H1 (cell line): ENCODE measurements at regions of chr19 and their contacts with region 1.

Region 1: GRCh38 chr19:13774217-13775191 is at the start of gene C19orf53:
- DNase-seq: peak in 1 of 2 experiments; percentile 85
- H3K4me3 ChIP-seq: peak within 1 kb of the TSS; percentile 81 to 99 (median 92)
- H3K27ac ChIP-seq: peak within 1 kb of the TSS; percentile 92
- H3K4me1 ChIP-seq: peaks cover 0 to 4% (median 1%) of the 10 kb centered on the region in 4 experiments; a peak in 1 of 7 replicates
- H3K27me3 ChIP-seq: no peaks in the 10 kb centered on the region
- CTCF ChIP-seq: no peak
- EP300 ChIP-seq: peak in 1 of 2 experiments; percentile 28; a peak in 1 of 3 replicates
- POLR2A ChIP-seq: peak; percentile 88 to 95
- RAD21 ChIP-seq: no peak
- total RNA-seq, gene C19orf53: 104 and 116 TPM in 2 replicates

Region 2: GRCh38 chr19:13742756-13743155 is 31.7 kb before region 1 on chr19:
- CTCF ChIA-PET with region 1: no interaction called
- POLR2A ChIA-PET with region 1: interaction called, 11 read pairs
- DNase-seq: no peak
- H3K4me3 ChIP-seq: no peak overlapping the region
- H3K27ac ChIP-seq: no peak overlapping the region
- H3K4me1 ChIP-seq: peaks cover 0 to 5% (median 3%) of the 10 kb centered on the region in 4 experiments; a peak in 2 of 7 replicates
- H3K27me3 ChIP-seq: no peaks in the 10 kb centered on the region
- CTCF ChIP-seq: no peak
- EP300 ChIP-seq: no peak
- POLR2A ChIP-seq: no peak
- RAD21 ChIP-seq: no peak

Region 3: DNA sequence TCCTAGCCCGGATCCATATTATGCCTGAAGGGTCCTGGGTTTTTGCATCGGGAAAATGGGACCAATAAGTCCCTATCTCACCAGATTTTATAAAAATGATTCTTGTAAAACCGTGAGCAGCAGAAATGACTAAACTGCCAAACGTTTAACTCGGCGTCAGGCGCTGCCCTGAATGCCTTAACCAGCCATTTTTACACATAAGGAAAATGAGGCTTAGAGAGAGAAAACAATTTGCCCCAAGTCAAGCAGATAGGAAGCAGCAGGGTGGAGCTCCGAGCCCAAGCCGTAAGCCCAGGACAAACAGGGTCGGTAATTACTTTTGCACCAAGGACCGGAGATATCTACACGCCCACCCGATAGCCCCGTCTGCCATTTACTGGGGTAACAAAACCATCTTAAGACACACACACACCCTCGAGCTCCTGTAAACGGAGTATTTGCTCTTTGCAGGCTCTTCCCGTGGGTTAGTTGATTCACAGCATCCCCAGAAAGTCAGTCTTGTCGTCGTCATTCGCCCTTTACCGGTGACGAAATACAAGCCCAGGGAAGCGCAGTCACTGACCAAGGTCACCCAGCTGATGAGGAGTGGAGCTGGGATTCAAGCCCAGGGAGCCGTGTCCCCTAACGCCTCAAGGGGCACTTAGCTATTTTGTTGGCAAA is 26.2 kb before region 1 on chr19:
- CTCF ChIA-PET with region 1: no interaction called
- POLR2A ChIA-PET with region 1: interaction called, 10 read pairs
- DNase-seq: peak in 1 of 2 experiments; percentile 47
- H3K4me3 ChIP-seq: peak overlapping the region; percentile 80 to 97 (median 88)
- H3K27ac ChIP-seq: peak overlapping the region; percentile 44
- H3K4me1 ChIP-seq: no peaks in the 10 kb centered on the region; a peak in 2 of 7 replicates
- H3K27me3 ChIP-seq: no peaks in the 10 kb centered on the region
- CTCF ChIP-seq: no peak
- EP300 ChIP-seq: no peak
- POLR2A ChIP-seq: no peak
- RAD21 ChIP-seq: no peak

Region 4: DNA sequence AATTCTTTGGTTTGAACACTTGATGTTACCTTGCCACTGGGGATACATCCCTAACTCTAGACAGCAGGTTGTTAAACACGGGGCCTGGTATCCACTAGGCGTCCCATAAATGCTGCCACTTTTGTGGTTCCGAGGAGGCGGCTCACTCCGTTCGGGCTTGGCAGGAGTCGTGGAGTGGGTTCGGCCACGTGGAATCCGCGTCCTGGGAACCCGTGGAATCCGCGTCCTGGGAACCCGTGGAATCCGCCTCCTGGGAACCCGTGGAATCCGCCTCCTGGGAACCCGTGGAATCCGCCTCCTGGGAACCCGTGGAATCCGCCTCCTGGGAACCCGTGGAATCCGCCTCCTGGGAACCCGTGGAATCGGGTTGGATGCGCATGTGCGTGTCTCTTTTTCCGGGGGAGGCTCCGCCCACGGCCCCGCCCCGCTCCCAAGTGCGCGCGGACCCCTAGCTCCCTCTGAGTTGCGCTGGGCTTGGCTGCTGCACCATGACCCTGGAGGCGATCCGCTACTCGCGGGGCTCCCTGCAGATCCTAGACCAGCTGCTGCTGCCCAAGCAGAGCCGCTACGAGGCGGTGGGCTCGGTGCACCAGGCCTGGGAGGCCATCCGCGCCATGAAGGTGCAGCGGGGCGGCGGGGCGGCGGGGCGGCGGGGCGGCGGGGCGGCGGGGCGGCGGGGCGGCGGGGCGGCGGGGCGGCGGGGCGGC is 10.2 kb before region 1 on chr19 and contains the start of gene MRI1:
- CTCF ChIA-PET with region 1: interaction called, 18 read pairs
- POLR2A ChIA-PET with region 1: interaction called, 39 read pairs
- DNase-seq: peak in 1 of 2 experiments; percentile 72
- H3K4me3 ChIP-seq: peak within 1 kb of the TSS; percentile 47 to 88 (median 52)
- H3K27ac ChIP-seq: no peak within 1 kb of the TSS
- H3K4me1 ChIP-seq: peaks cover 0 to 9% (median 2%) of the 10 kb centered on the region in 4 experiments; a peak in 3 of 7 replicates
- H3K27me3 ChIP-seq: no peaks in the 10 kb centered on the region; a peak in 1 of 7 replicates
- CTCF ChIP-seq: no peak
- EP300 ChIP-seq: no peak
- POLR2A ChIP-seq: no peak
- RAD21 ChIP-seq: no peak
- total RNA-seq, gene MRI1: 21.7 and 24.5 TPM in 2 replicates

Region 5: DNA sequence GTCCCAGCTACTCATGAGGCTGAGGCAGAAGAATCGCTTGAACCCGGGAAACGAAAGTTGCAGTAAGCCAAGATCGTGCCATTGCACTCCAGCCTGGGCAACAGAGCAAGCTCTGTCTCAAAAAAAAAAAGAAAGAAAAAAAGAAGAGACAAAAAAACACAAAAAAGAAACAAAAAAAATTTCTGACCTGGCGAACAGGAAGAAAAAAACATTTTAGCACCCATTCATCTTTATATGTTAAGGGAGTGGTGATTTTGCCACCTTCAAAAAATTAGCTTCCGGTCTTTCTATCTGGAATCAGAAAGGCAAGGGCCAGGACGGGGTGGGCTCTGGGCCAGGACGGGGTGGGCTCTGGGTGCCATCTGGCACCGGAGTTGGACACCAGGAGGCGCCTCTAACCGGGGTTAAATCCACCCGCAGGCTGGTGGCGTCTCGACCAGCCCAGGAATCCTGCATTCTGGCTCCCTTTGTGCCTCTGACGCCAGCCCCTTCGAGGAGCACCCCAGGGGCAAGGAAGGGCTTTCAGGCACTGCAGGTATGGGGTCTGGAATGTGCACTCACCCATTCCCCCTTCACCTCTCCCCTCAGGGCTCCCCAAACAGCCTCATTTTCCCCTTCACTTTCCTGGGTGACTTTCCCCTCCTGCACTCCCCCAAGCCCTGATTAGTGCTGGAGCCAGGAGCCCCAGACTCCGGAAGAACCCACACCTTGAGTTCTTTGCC is 10.4 kb after region 1 on chr19:
- CTCF ChIA-PET with region 1: interaction called, 10 read pairs
- POLR2A ChIA-PET with region 1: interaction called, 15 read pairs
- DNase-seq: peak in 1 of 2 experiments; percentile 88
- H3K4me3 ChIP-seq: peak overlapping the region in 1 of 4 experiments; percentile 7; a peak in 1 of 8 replicates
- H3K27ac ChIP-seq: 0 out of 2 replicates have a peak overlapping the region, but pooled peaks have one; percentile 11
- H3K4me1 ChIP-seq: peaks cover 0 to 3% (median 2%) of the 10 kb centered on the region in 4 experiments; a peak in 4 of 7 replicates
- H3K27me3 ChIP-seq: no peaks in the 10 kb centered on the region; a peak in 2 of 7 replicates
- CTCF ChIP-seq: peak; percentile 65 to 82 (median 80)
- EP300 ChIP-seq: no peak; a peak in 1 of 3 replicates
- POLR2A ChIP-seq: no peak
- RAD21 ChIP-seq: peak; percentile 78 to 82

Region 6: DNA sequence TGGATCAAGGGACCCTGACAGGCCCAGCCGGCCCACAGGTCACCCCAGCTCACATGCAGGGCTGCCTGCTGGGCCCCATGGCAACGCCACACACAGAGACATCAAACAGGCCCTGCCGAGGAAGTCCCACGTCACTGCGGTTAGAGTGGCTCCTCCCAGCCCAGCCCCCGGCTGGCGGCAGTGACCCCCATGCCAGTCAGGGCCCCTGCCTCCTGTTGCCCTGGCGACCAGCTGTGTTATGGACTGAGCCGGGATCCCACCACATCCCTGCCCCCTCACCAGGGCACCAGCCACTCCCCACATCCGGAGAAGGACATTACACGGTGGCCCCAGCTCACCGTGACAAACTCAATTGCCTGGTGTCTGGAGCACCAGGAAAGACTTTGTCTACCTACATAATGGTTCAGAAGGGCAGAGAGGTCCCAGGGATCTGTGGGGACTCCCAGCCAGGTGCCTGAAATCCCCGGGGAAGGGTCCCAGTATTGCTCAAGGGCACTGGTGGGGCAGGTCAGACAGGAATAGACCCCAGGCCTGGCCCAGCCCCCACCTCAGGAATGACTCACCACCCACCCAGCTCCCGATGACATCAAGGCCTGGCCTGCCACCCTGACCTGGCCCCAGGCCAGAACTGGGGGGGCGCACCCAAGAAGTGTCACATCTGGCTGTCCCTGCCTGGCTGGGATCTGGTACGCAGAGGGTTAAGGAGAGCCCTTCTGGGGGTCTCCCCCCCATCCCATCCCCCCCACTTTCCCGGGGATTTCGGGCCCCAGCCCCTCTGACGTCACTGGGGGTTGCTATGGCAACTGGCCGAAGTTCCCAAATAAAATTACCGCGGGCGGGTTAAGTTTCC is 72.3 kb after region 1 on chr19:
- CTCF ChIA-PET with region 1: no interaction called
- POLR2A ChIA-PET with region 1: interaction called, 11 read pairs
- DNase-seq: peak in 1 of 2 experiments; percentile 98
- H3K4me3 ChIP-seq: peak overlapping the region; percentile 52 to 78 (median 64); a peak in 7 of 8 replicates
- H3K27ac ChIP-seq: peak overlapping the region; percentile 97
- H3K4me1 ChIP-seq: peaks cover 6 to 38% (median 30%) of the 10 kb centered on the region in 4 experiments
- H3K27me3 ChIP-seq: no peaks in the 10 kb centered on the region
- CTCF ChIP-seq: no peak
- EP300 ChIP-seq: peak in 1 of 2 experiments; percentile 89; a peak in 1 of 3 replicates
- POLR2A ChIP-seq: peak in 1 of 2 experiments; percentile 84; a peak in 2 of 3 replicates
- RAD21 ChIP-seq: no peak